CD8-positive, alpha-beta T cell (primary cell): ENCODE measurements at regions of chr6 and their contacts with region 1.

Region 1: DNA sequence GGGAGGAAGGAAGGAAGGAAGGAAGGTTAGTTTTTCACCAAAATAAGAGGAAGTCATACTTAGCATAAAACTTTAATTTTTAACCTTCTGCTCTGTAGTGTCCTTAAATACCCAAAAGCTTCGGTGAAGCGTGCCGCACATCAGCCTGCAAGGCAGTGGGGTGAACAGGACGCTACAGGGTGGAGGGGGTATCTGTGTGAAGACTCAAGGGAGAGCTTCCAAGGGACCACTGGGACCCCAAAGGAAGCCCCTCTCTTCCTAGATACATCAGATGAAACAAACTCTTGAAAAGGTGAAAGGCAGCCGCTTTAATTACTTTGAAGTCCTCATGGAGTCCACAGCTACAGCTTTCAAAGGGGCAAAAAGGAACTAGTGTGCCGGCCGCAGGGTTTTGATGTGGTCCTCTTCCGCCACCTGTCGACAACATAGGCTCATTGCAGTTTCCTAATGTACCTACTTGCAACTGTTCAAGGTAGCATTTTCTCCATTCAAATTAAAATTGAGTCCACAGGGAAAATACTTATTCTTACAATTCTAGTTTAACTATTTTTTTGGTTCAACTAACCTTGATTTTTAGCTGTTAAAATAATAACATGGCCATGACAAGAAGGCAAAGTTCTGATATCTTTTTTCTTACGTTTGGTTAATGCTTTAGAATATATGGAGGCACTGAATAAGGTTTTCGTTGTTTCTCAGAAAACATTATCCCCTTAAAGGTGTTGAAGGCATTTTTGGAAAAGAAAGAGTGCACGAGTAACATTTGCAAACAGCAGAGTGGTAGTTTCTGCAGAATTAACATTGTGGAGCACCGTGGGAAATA is 135.0 kb upstream of the RIPOR2 start:
- DNase-seq: peak; percentile 62 to 92 (median 81)
- ATAC-seq: peak; percentile 98
- H3K4me3 ChIP-seq: peak overlapping the region in 1 of 2 experiments; percentile 12
- H3K4me3 Mint-ChIP-seq: peak overlapping the region; percentile 73
- H3K27ac ChIP-seq: peak overlapping the region in 1 of 2 experiments; percentile 31
- H3K27ac Mint-ChIP-seq: peak overlapping the region; percentile 87
- H3K4me1 ChIP-seq: no peaks in the 10 kb centered on the region
- H3K4me1 Mint-ChIP-seq: peaks cover 9% of the 10 kb centered on the region
- H3K27me3 ChIP-seq: no peaks in the 10 kb centered on the region
- H3K27me3 Mint-ChIP-seq: no peaks in the 10 kb centered on the region
- CTCF ChIP-seq: peak; percentile 92

Region 2: DNA sequence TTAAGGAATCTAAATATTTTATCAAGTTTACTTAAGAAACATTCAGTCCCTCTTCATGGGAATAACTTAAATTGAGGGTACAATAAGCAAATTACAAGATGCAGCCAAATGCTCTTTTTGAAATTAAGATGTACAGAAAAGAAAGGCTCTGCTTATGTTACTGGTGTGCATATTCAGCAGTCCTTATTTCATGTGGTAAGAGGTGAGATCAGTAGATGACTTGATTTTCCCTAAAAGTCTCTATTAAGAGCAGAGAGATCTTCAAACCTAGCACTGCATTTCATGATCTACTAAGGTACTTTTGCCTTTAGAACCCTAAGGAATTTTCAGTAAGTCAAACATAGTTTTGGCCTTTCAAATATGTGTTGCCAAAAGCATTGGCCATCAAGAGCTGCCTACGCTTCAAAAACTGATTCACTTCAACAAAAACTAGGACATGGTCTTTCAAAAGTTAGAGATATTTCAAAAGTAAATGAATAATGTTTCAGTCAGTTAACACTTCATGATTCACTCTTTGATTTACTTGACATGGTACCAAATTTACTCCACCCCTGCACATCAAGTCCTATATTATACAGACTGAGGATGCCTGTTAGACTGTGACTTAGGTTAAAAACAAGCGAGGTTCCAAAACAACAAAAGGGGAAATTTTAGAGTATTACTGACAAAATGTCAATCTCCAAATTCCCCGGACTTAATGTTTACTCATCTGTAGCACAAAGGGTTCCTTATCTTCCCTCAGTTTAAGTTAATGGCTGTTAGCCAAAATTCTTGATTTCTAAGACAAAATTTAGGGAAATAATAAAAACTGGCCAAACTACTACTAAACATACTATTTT is 371.0 kb before region 1 on chr6:
- CTCF ChIA-PET with region 1: no interaction called
- POLR2A ChIA-PET with region 1: no interaction called
- intact Hi-C with region 1: loop called in 1 of 2 experiments (anchors 5 kb)
- DNase-seq: no peak
- ATAC-seq: no peak
- H3K4me3 ChIP-seq: no peak overlapping the region
- H3K4me3 Mint-ChIP-seq: no peak overlapping the region
- H3K27ac ChIP-seq: peak overlapping the region in 1 of 2 experiments; percentile 0
- H3K27ac Mint-ChIP-seq: peak overlapping the region; percentile 71
- H3K4me1 ChIP-seq: no peaks in the 10 kb centered on the region
- H3K4me1 Mint-ChIP-seq: peaks cover 24% of the 10 kb centered on the region
- H3K27me3 ChIP-seq: no peaks in the 10 kb centered on the region
- H3K27me3 Mint-ChIP-seq: no peaks in the 10 kb centered on the region
- CTCF ChIP-seq: no peak

Region 3: GRCh38 chr6:24855395-24856245 is 215.1 kb before region 1 on chr6:
- CTCF ChIA-PET with region 1: interaction called, 20 read pairs
- POLR2A ChIA-PET with region 1: interaction called, 3 read pairs
- intact Hi-C with region 1: loop called (anchors 1 kb)
- DNase-seq: peak; percentile 39 to 90 (median 67)
- ATAC-seq: peak; percentile 69
- H3K4me3 ChIP-seq: no peak overlapping the region
- H3K4me3 Mint-ChIP-seq: peak overlapping the region; percentile 36
- H3K27ac ChIP-seq: peak overlapping the region in 1 of 2 experiments; percentile 52
- H3K27ac Mint-ChIP-seq: peak overlapping the region; percentile 96
- H3K4me1 ChIP-seq: peaks cover 53% of the 10 kb centered on the region
- H3K4me1 Mint-ChIP-seq: peaks cover 61% of the 10 kb centered on the region
- H3K27me3 ChIP-seq: no peaks in the 10 kb centered on the region
- H3K27me3 Mint-ChIP-seq: no peaks in the 10 kb centered on the region
- CTCF ChIP-seq: peak; percentile 77

Region 4: GRCh38 chr6:25042036-25042521 is 28.7 kb before region 1 on chr6:
- CTCF ChIA-PET with region 1: interaction called, 21 read pairs
- POLR2A ChIA-PET with region 1: interaction called, 6 read pairs
- intact Hi-C with region 1: no loop called
- DNase-seq: peak in 8 of 9 experiments; percentile 20 to 80 (median 59)
- ATAC-seq: peak; percentile 63
- H3K4me3 ChIP-seq: peak overlapping the region; percentile 52 to 82
- H3K4me3 Mint-ChIP-seq: peak overlapping the region; percentile 94
- H3K27ac ChIP-seq: peak overlapping the region; percentile 58 to 90
- H3K27ac Mint-ChIP-seq: peak overlapping the region; percentile 92
- H3K4me1 ChIP-seq: peaks cover 48% of the 10 kb centered on the region
- H3K4me1 Mint-ChIP-seq: peaks cover 60% of the 10 kb centered on the region
- H3K27me3 ChIP-seq: no peaks in the 10 kb centered on the region
- H3K27me3 Mint-ChIP-seq: no peaks in the 10 kb centered on the region
- CTCF ChIP-seq: no peak

Region 5: DNA sequence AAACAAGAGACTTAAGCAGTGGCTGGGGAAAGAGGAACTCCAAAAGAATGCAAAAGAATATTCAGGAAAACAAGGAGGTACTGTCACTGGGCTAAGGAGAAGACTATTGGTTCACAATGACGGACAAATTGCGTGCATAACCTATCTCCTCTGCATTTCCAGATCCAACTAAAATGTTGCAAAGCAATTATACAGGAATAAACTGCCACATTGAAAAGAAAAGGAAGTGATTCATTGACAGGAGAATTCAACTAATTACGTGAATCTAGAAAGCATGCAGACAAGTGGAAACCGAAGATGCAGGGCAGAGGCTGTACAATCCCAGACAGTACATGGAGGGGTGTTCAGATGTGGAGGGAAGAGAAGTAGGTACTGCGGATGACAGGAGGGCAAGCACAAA is 17.8 kb after region 1 on chr6:
- CTCF ChIA-PET with region 1: interaction called, 15 read pairs
- POLR2A ChIA-PET with region 1: interaction called, 3 read pairs
- intact Hi-C with region 1: no loop called
- DNase-seq: no peak
- ATAC-seq: no peak
- H3K4me3 ChIP-seq: no peak overlapping the region
- H3K4me3 Mint-ChIP-seq: no peak overlapping the region
- H3K27ac ChIP-seq: no peak overlapping the region
- H3K27ac Mint-ChIP-seq: no peak overlapping the region
- H3K4me1 ChIP-seq: peaks cover 19% of the 10 kb centered on the region
- H3K4me1 Mint-ChIP-seq: peaks cover 15% of the 10 kb centered on the region
- H3K27me3 ChIP-seq: no peaks in the 10 kb centered on the region
- H3K27me3 Mint-ChIP-seq: no peaks in the 10 kb centered on the region
- CTCF ChIP-seq: no peak

Region 6: DNA sequence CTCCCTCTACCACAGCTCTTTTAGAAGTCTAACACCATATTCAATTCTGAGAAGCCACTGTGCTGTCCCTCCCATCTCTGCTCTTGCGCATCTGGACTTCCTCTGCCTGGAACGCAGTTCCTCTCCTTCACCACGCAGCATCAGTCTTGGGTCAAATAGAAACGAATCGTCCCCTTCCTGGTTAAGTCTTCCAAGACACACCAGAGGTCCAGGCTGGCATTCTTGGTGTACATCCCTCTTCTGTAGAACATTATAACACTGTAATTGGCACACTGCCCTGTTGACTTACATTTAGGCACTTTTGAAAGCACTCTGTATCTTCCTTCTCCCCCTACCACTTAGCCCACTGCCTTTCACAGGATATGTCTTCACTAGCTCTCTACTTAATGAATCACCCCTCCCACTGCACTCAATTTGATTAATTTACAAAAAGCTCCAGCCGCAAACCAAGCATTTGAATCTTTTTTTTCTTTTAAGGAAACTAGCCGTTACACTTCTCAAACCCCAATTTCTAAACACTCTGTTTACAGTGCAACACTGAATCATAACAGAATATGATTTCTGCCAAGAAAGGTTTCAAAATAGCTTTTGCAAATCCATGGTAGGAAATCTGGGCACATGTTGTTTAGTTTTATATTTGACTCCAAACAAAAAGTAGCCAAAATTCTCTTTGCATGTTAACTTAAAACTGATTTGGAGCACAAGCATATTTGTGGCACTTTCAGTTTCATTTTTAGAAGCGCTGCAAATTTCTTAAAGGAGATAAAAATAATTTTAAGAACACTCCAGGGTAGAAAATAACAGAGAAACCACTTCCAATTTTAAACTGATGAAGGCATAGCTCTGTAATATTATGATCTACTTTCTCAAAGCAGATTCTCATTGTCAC is 67.7 kb after region 1 on chr6:
- CTCF ChIA-PET with region 1: no interaction called
- POLR2A ChIA-PET with region 1: no interaction called
- intact Hi-C with region 1: no loop called
- DNase-seq: peak; percentile 8 to 88 (median 63)
- ATAC-seq: peak; percentile 90
- H3K4me3 ChIP-seq: peak overlapping the region; percentile 58 to 72
- H3K4me3 Mint-ChIP-seq: peak overlapping the region; percentile 89
- H3K27ac ChIP-seq: peak overlapping the region; percentile 70 to 85
- H3K27ac Mint-ChIP-seq: peak overlapping the region; percentile 93
- H3K4me1 ChIP-seq: peaks cover 25% of the 10 kb centered on the region
- H3K4me1 Mint-ChIP-seq: peaks cover 39% of the 10 kb centered on the region
- H3K27me3 ChIP-seq: no peaks in the 10 kb centered on the region
- H3K27me3 Mint-ChIP-seq: no peaks in the 10 kb centered on the region
- CTCF ChIP-seq: no peak